ENCODE measurements at regions of chr1 and their contacts with region 1.

Region 1: GRCh38 chr1:110766025-110766647 is 91.4 kb upstream of the KCNA3 start:
- DNase-seq: peak; percentile 76
- H3K4me3 Mint-ChIP-seq: peak overlapping the region; percentile 6
- H3K27ac Mint-ChIP-seq: peak overlapping the region; percentile 34
- H3K4me1 Mint-ChIP-seq: peaks cover 10% of the 10 kb centered on the region
- H3K27me3 Mint-ChIP-seq: peaks cover 30% of the 10 kb centered on the region

Region 2: DNA sequence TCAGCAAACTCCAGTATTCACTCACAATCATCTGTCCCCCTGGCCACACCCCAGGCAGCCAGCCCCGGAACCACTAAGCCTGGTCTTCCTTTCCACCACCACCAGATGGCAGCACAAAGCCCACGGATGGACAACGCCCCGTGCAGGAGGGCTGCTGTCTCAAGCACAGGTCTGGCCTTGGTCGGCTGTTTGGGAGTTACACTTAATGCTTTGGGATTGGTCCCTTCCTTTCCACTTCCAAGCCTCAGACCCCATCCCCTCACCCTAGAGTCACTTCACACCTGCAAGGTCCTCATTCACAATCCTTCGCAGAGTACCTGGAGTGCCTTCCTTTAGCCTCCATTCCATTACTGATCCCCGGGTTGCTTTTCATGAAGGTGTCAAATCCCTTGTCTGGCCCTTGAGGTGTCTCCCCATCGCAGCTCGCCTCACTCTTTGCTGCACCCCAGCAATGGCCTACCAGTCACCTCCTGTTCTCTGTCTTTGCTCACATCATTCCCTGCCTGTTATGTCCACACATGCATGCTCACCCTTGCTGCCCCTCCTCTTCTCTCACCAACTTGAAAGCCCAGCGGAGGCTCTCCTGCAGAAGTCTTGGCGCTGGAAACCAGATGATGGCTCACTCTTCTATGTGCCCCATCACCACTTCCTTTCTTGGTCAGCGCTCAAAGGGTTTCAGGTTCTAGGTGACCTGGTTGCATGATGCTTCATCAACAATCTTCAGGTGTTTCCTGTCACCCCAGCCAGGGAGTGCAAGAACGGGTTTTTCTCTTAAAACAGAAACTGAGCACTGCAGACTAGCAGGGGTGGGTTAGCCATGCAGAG is 135.1 kb before region 1 on chr1:
- CTCF ChIA-PET with region 1: interaction called, 14 read pairs
- POLR2A ChIA-PET with region 1: no interaction called
- DNase-seq: peak; percentile 93
- H3K4me3 Mint-ChIP-seq: no peak overlapping the region
- H3K27ac Mint-ChIP-seq: no peak overlapping the region
- H3K4me1 Mint-ChIP-seq: peaks cover 33% of the 10 kb centered on the region
- H3K27me3 Mint-ChIP-seq: no peaks in the 10 kb centered on the region

Region 3: DNA sequence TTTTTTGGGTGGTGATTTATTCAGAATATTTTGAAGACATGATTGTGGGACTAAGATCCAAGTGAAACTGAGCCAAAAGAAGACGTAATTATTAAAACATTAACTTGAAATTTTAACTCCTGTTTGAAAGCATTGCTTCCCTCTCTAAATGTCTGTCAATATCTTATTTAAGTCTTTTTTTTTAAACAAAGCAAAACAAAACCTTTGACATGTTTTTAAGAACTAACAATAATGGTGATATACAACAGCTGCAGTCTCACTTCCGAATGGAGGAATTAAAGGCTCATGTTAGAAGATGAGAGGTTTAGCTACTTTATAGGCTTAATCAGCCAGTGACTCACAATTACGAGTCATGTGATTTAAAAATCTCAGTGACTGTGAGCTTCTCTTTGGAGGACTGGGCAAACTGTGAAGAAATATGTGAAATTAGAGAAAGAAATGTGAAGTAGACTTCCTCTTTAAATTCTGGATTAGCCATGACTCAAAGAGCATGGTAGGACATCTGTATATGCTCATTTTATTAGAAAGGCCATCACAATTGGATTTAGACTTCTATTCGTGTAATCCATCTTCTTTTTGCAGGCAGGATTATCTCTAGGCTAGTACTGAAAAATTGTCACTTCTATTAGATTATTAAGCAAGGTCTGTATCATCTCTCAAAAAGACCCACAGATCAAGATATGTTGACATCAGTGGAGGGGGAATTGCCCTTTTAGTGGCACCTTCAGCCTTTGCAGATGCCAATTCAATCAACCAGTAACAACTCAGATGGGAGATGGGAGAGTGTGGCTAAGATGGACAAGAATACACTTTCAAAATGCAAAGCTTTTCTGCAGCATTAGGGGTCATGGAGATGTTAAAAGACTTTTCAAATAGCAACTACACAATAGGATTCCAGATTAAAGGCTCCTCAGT is 120.1 kb before region 1 on chr1:
- CTCF ChIA-PET with region 1: interaction called, 12 read pairs
- POLR2A ChIA-PET with region 1: no interaction called
- DNase-seq: no peak
- H3K4me3 Mint-ChIP-seq: no peak overlapping the region
- H3K27ac Mint-ChIP-seq: peak overlapping the region; percentile 83
- H3K4me1 Mint-ChIP-seq: peaks cover 46% of the 10 kb centered on the region
- H3K27me3 Mint-ChIP-seq: no peaks in the 10 kb centered on the region

Region 4: DNA sequence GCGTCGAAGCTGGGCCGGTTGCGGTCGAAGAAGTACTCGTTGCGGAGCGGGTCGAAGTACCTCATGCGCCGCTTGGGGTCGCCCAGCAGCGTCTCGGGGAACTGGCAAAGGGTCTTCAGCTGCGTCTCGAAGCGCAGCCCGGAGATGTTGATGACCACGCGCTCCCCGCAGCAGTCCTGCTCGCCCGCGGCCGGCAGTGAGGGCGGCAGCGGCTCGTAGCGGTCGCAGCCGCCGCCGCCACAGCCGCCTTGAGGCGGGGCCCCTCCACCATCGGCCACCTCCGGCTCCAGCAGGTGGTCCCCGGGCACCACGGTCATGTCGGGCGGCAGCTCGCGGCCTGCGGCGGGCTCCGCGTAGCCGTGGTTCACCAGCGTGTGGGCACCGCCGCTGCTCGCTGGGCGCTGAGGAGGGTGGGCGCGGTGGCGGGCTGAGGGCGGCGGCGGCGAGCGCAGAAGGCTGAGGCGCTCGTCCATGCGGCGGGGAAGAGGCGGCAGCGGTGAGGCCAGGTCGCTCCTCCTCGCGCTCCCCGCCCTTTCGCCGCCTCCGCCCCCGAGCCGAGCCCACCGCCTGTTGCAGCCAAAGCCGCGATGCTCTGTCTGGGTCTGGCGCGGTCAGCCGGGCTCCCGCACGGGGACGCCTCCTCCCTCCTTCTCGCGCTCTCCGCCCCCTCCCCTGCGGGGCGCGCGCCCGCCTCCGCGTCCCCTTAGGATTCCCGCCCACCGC is 91.6 kb before region 1 on chr1 and contains the start of gene KCNA3:
- CTCF ChIA-PET with region 1: interaction called, 10 read pairs
- POLR2A ChIA-PET with region 1: no interaction called
- DNase-seq: peak; percentile 67
- H3K4me3 Mint-ChIP-seq: peak within 1 kb of the TSS; percentile 95
- H3K27ac Mint-ChIP-seq: peak within 1 kb of the TSS; percentile 98
- H3K4me1 Mint-ChIP-seq: peaks cover 30% of the 10 kb centered on the region
- H3K27me3 Mint-ChIP-seq: no peaks in the 10 kb centered on the region
- total RNA-seq, gene KCNA3: 67.0 to 73.3 TPM

Region 5: GRCh38 chr1:110734133-110734680 is 31.9 kb before region 1 on chr1:
- CTCF ChIA-PET with region 1: no interaction called
- POLR2A ChIA-PET with region 1: no interaction called
- DNase-seq: no peak
- H3K4me3 Mint-ChIP-seq: no peak overlapping the region
- H3K27ac Mint-ChIP-seq: no peak overlapping the region
- H3K4me1 Mint-ChIP-seq: no peaks in the 10 kb centered on the region
- H3K27me3 Mint-ChIP-seq: peaks cover 7% of the 10 kb centered on the region

Region 6: GRCh38 chr1:110798691-110799256 is 32.6 kb after region 1 on chr1:
- CTCF ChIA-PET with region 1: no interaction called
- POLR2A ChIA-PET with region 1: no interaction called
- DNase-seq: no peak
- H3K4me3 Mint-ChIP-seq: no peak overlapping the region
- H3K27ac Mint-ChIP-seq: no peak overlapping the region
- H3K4me1 Mint-ChIP-seq: no peaks in the 10 kb centered on the region
- H3K27me3 Mint-ChIP-seq: no peaks in the 10 kb centered on the region